Naive thymus-derived CD4-positive, alpha-beta T cell (primary cell): ENCODE measurements at regions of chr6 and their contacts with region 1.

Region 1: GRCh38 chr6:140921366-140922226 is 1211.1 kb upstream of the GJE1 start:
- DNase-seq: no peak
- ATAC-seq: no peak
- H3K4me3 ChIP-seq: no peak overlapping the region
- H3K4me3 Mint-ChIP-seq: no peak overlapping the region
- H3K27ac ChIP-seq: no peak overlapping the region
- H3K27ac Mint-ChIP-seq: no peak overlapping the region
- H3K4me1 ChIP-seq: no peaks in the 10 kb centered on the region
- H3K4me1 Mint-ChIP-seq: no peaks in the 10 kb centered on the region
- H3K27me3 ChIP-seq: no peaks in the 10 kb centered on the region
- H3K27me3 Mint-ChIP-seq: peaks cover 0 to 15% (median 3%) of the 10 kb centered on the region in 5 donors

Region 2: GRCh38 chr6:139219271-139219729 is 1702.3 kb before region 1 on chr6:
- CTCF ChIA-PET with region 1: no interaction called
- POLR2A ChIA-PET with region 1: no interaction called
- intact Hi-C with region 1: loop called in 1 of 2 experiments (anchors 5 kb)
- DNase-seq: peak; percentile 39 to 76 (median 60)
- ATAC-seq: peak; percentile 100
- H3K4me3 ChIP-seq: no peak overlapping the region
- H3K4me3 Mint-ChIP-seq: peak overlapping the region in 8 of 10 donors; percentile 41 to 68 (median 58)
- H3K27ac ChIP-seq: no peak overlapping the region
- H3K27ac Mint-ChIP-seq: peak overlapping the region; percentile 49 to 92 (median 78)
- H3K4me1 ChIP-seq: peaks cover 5 to 10% of the 10 kb centered on the region in 2 donors
- H3K4me1 Mint-ChIP-seq: peaks cover 6 to 20% (median 12%) of the 10 kb centered on the region in 7 donors
- H3K27me3 ChIP-seq: no peaks in the 10 kb centered on the region
- H3K27me3 Mint-ChIP-seq: no peaks in the 10 kb centered on the region

Region 3: DNA sequence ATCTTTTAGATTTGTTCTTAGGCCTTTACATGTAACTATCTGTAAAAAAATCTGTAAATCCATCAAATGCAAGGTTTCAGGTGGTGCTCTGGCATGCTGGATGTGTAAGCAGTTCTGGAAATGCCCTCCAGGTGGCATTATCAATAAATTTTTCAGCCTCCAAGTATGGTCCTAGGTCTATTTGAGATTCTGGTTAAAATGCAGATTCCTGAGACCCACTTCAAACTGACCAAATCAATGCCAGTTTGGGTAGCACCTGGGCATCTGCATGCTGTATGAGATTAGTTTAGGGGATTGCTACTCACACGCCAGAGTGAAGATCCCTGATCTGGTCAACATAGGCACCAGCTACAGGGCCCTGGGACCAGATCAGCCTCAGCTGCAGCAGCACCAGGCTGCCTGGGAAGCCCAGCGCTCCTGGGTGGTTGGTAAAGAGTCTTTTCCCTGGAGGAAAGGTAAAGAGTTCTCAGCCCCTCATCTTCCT is 1039.8 kb before region 1 on chr6:
- CTCF ChIA-PET with region 1: no interaction called
- POLR2A ChIA-PET with region 1: no interaction called
- intact Hi-C with region 1: loop called in 1 of 2 experiments (anchors 5 kb)
- DNase-seq: peak in 5 of 9 donors; percentile 7 to 20 (median 14)
- ATAC-seq: peak; percentile 58
- H3K4me3 ChIP-seq: no peak overlapping the region
- H3K4me3 Mint-ChIP-seq: peak overlapping the region in 3 of 10 donors; percentile 11 to 41 (median 34)
- H3K27ac ChIP-seq: no peak overlapping the region
- H3K27ac Mint-ChIP-seq: peak overlapping the region in 1 of 9 donors; percentile 22
- H3K4me1 ChIP-seq: no peaks in the 10 kb centered on the region
- H3K4me1 Mint-ChIP-seq: peaks cover 0 to 12% (median 2%) of the 10 kb centered on the region in 7 donors
- H3K27me3 ChIP-seq: no peaks in the 10 kb centered on the region
- H3K27me3 Mint-ChIP-seq: peaks cover 0 to 19% (median 13%) of the 10 kb centered on the region in 5 donors